GM10248 (cell line): ENCODE measurements at regions of chr2 and their contacts with region 1.

Region 1: GRCh38 chr2:16513626-16514025 is 152.0 kb downstream of the CYRIA start:
- DNase-seq: no peak
- CTCF ChIP-seq: no peak

Region 2: GRCh38 chr2:16525265-16525887 is 11.8 kb after region 1 on chr2:
- CTCF ChIA-PET with region 1: interaction called, 14 read pairs
- POLR2A ChIA-PET with region 1: no interaction called
- DNase-seq: peak; percentile 44
- CTCF ChIP-seq: peak; percentile 55